Activated CD8-positive, alpha-beta T cell treated with anti-CD3 and anti-CD28 coated beads for 36 hours (primary cell): ENCODE measurements at regions of chr11 and their contacts with region 1.

Region 1: GRCh38 chr11:68297812-68298658 is 14.4 kb upstream of the LRP5 start:
- DNase-seq: peak; percentile 79
- ATAC-seq: peak; percentile 99
- H3K4me3 Mint-ChIP-seq: no peak overlapping the region
- H3K27ac Mint-ChIP-seq: no peak overlapping the region
- H3K4me1 Mint-ChIP-seq: no peaks in the 10 kb centered on the region
- H3K27me3 Mint-ChIP-seq: no peaks in the 10 kb centered on the region
- CTCF ChIP-seq: peak; percentile 94

Region 2: GRCh38 chr11:68257475-68258362 is 40.3 kb before region 1 on chr11:
- CTCF ChIA-PET with region 1: interaction called, 224 read pairs
- POLR2A ChIA-PET with region 1: interaction called, 5 read pairs
- intact Hi-C with region 1: loop called (anchors 1 kb)
- DNase-seq: peak; percentile 99
- ATAC-seq: peak; percentile 95
- H3K4me3 Mint-ChIP-seq: no peak overlapping the region
- H3K27ac Mint-ChIP-seq: no peak overlapping the region
- H3K4me1 Mint-ChIP-seq: peaks cover 3% of the 10 kb centered on the region
- H3K27me3 Mint-ChIP-seq: no peaks in the 10 kb centered on the region
- CTCF ChIP-seq: peak; percentile 84

Region 3: GRCh38 chr11:68271781-68272608 is 26.0 kb before region 1 on chr11 and contains the start of gene C11orf24:
- CTCF ChIA-PET with region 1: interaction called, 46 read pairs
- POLR2A ChIA-PET with region 1: interaction called, 4 read pairs
- intact Hi-C with region 1: no loop called
- DNase-seq: peak; percentile 94
- ATAC-seq: peak; percentile 96
- H3K4me3 Mint-ChIP-seq: peak within 1 kb of the TSS; percentile 82
- H3K27ac Mint-ChIP-seq: peak within 1 kb of the TSS; percentile 90
- H3K4me1 Mint-ChIP-seq: peaks cover 29% of the 10 kb centered on the region
- H3K27me3 Mint-ChIP-seq: no peaks in the 10 kb centered on the region
- CTCF ChIP-seq: no peak
- total RNA-seq, gene C11orf24: 38.0 to 40.7 TPM

Region 4: GRCh38 chr11:68312117-68312779 is 14.2 kb after region 1 on chr11 and contains the start of gene LRP5:
- CTCF ChIA-PET with region 1: interaction called, 17 read pairs
- POLR2A ChIA-PET with region 1: interaction called, 3 read pairs
- intact Hi-C with region 1: no loop called
- DNase-seq: peak; percentile 27
- ATAC-seq: peak; percentile 56
- H3K4me3 Mint-ChIP-seq: peak within 1 kb of the TSS; percentile 92
- H3K27ac Mint-ChIP-seq: peak within 1 kb of the TSS; percentile 72
- H3K4me1 Mint-ChIP-seq: peaks cover 13% of the 10 kb centered on the region
- H3K27me3 Mint-ChIP-seq: peaks cover 2% of the 10 kb centered on the region
- CTCF ChIP-seq: no peak
- total RNA-seq, gene LRP5: 10.5 to 15.3 TPM